Heart right ventricle (tissue), 16 donors: ENCODE measurements at regions of chr4 and their contacts with region 1.

Region 1: DNA sequence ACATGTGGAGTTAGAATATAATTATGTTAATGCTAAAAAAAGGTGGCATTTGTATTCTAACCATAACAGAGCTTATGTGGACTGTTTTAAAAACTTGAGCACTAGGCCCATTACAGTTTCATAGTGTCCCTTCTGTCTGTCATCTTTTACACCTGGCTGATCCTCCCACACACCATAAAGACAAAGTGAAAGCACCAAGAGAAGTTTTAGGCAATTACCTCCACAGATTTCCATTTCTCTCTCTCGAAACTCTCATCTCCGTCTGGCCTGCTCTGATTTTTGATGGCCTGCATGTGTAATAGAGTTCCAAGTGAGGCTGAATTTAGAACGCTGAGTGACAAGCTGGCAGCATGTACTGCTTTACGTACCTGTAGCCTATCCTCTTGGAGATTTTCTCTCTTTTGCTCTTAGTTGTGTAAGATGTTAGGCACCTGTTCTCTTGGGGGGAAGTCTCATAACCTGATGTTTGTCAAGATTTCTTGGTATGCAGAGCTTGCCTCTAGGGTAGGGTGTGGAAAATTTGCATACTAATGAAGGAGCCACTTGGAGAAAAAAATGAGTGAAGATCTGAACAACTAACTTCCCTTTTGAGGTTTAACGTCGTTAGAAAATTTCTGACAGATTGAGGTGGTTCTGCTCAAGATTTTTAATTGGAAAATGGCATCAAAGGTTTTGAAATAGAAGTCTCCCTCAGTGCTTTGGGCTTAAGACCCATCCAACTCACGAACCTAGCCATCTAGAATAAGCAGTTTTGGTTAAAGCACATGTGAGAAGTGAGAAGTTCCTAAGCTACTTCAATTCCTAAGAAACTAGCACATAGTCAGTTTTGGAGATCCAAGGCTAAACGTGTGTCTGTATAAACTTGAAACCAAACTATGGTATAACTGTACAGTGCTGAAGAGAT is 57.6 kb upstream of the RAP1GDS1 start:
- DNase-seq: no peak
- ATAC-seq: peak in 3 of 8 donors; percentile 27 to 64 (median 49)
- H3K4me3 ChIP-seq: no peak overlapping the region
- H3K27ac ChIP-seq: no peak overlapping the region
- H3K4me1 ChIP-seq: peaks cover 0 to 9% (median 0%) of the 10 kb centered on the region in 9 donors
- H3K27me3 ChIP-seq: no peaks in the 10 kb centered on the region
- CTCF ChIP-seq: no peak

Region 2: DNA sequence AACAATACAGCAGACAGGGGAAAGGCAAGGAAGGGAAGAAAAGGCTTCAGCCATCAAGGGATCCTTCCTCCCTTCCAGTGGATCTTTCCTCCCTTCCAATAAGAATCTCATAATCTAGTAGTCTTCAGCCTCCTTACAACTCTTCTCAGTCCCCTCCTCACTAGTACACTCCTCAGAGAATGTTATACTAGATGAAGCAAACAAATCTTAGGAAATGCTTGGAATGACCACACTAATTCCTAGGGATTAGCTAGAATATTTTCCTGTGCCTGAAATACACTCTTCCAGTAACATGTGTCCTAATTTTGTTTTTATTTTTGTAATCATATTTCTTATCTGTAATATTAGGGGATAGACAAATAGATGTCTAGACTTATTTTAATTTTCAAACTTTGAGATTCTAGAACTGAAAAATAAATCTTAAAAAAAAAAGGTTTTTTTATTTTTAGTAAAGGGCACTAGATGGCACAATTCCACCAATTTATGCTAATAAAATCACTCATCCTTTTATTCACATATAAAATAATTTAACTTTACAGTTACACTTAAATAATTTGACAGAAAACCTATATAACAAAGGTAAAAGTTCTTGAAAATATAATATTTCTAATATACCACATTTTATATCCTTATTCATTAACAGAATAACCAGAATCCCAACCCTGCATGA is 53.4 kb before region 1 on chr4:
- intact Hi-C with region 1: loop called in 1 of 10 experiments (anchors 5 kb)
- DNase-seq: no peak
- ATAC-seq: no peak
- H3K4me3 ChIP-seq: no peak overlapping the region
- H3K27ac ChIP-seq: no peak overlapping the region
- H3K4me1 ChIP-seq: peaks cover 0 to 10% (median 0%) of the 10 kb centered on the region in 9 donors
- H3K27me3 ChIP-seq: no peaks in the 10 kb centered on the region
- CTCF ChIP-seq: peak in 6 of 9 donors; percentile 22 to 52 (median 39)

Region 3: DNA sequence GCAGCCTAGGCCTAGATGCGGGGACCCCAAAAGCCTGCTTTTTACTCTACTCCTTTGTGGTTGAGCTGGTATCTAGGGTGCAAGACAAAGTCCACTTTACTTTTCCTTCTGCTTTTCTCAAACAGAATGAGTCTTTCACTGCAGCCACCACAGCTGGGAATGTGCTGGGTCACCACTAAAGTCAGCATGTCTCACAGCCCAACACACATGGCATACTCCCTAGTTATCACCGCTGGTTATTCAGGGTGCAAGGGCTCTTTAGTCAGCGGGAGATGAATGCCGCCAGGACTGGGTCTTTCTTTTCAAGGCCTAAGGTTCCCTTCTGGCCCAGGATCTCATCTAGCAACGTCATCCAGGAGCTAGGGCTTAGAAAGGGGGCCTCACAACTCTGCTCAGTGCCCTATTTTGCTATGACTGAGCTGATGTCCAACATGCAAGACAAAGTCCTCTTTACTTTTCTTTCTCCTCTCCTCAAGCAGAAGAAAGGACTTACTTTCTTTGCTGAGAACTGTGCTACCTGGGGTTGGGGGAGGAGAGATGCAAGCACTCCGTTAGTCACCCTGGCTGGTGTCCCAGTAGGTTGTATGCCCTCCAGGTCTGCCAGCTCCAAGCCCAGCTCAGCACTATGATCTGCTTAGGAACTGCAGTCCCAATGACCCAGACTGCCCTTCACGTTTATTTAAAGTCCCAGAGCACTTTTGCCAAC is 37.4 kb before region 1 on chr4:
- intact Hi-C with region 1: loop called in 1 of 10 experiments (anchors 1 kb)
- DNase-seq: peak; percentile 62
- ATAC-seq: peak; percentile 89 to 99 (median 98)
- H3K4me3 ChIP-seq: no peak overlapping the region
- H3K27ac ChIP-seq: peak overlapping the region in 4 of 10 donors; percentile 9 to 63 (median 42)
- H3K4me1 ChIP-seq: peaks cover 0 to 5% (median 0%) of the 10 kb centered on the region in 9 donors
- H3K27me3 ChIP-seq: no peaks in the 10 kb centered on the region
- CTCF ChIP-seq: no peak

Region 4: DNA sequence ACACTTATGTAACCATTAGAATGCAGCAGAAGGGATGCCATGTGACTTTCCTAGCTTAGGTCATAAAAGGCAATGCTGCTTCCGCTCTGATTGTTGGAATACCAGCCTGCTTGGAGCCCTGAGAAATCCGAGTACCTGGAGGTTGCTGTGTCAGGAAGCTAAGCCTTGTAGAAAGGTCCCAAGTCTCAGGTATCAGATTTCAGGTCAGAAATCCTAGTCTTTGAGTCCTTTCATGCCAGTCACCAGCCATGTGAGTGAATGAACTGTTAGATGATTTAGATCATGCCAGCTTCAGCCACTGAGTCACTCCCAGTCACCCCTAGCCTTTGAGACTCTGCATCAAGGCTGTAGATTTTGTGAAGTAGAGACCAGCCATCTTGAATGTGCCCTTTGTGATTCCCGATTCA is 81.1 kb after region 1 on chr4:
- intact Hi-C with region 1: no loop called
- DNase-seq: no peak
- ATAC-seq: no peak
- H3K4me3 ChIP-seq: no peak overlapping the region
- H3K27ac ChIP-seq: no peak overlapping the region
- H3K4me1 ChIP-seq: peaks cover 0 to 19% (median 13%) of the 10 kb centered on the region in 9 donors
- H3K27me3 ChIP-seq: no peaks in the 10 kb centered on the region
- CTCF ChIP-seq: no peak